ENCODE measurements at regions of chr19 and their contacts with region 1.

Region 1: DNA sequence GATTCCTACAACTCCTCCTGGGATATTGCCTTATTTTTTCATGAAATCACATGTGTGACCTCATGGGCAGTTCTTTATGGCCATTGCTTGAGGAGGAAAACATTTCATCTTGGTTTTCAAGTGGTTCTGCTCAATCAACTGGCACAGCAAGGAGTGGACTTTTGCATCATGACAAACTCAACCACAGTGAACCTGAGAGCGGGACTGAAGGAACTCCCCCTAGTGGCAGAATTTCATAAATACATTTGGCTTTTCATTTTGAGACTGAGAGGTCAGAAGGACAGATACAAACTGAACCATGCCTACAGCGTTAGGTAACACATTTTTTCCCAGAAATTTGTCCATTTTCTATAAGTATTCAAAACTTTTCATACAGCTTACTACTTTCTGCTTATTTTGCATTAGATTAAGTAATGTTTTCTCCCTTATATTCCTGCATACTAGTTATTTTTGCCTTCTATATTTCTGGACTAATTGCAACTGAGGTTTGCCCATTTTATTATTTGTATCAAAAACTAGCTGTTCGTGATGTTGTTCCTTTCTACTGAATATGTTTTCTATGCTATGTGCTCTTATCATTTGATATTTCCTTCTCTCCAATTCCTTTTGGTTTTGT is 13.4 kb upstream of the SIGLEC12 start:
- H3K4me3 Mint-ChIP-seq: no peak overlapping the region
- H3K27ac Mint-ChIP-seq: no peak overlapping the region
- H3K4me1 Mint-ChIP-seq: peaks cover 14% of the 10 kb centered on the region
- H3K27me3 Mint-ChIP-seq: no peaks in the 10 kb centered on the region

Region 2: DNA sequence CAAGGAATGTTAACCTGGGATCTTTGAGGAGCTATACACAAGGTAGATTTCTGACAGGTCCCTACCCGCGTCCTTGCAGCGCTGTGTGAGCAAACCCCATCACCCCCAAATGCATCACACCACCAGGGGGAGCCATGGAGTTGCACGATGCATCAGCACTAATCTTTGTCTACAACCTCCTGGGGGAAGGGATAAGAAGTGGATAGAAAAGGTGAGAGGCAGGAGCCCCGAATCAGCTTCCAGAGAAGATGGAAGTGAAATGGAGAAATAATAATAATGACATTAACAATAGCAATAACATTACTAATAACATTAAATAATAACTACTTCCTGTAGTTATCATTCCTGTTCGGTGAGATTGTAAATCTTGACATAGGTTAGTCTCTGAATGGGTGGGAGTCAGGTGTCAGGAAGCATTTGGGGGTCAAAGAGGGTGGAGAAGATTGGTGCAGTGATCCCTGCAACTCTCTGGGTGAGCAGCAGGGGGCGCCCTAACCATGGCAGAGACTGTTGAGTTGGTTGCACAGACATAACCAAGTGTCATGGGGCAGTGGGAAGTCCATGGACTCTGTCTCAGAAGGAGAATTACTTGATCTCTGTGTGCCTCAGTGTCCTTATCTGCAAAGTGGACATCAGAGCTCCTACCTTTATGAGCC is 356.4 kb before region 1 on chr19:
- intact Hi-C with region 1: no loop called
- H3K4me3 Mint-ChIP-seq: no peak overlapping the region
- H3K27ac Mint-ChIP-seq: peak overlapping the region; percentile 67
- H3K4me1 Mint-ChIP-seq: peaks cover 23% of the 10 kb centered on the region
- H3K27me3 Mint-ChIP-seq: no peaks in the 10 kb centered on the region

Region 3: GRCh38 chr19:51473009-51473707 is 41.8 kb before region 1 on chr19:
- intact Hi-C with region 1: loop called (anchors 1 kb)
- H3K4me3 Mint-ChIP-seq: no peak overlapping the region
- H3K27ac Mint-ChIP-seq: no peak overlapping the region
- H3K4me1 Mint-ChIP-seq: peaks cover 23% of the 10 kb centered on the region
- H3K27me3 Mint-ChIP-seq: peaks cover 20% of the 10 kb centered on the region